ENCODE measurements at regions of chr1 and their contacts with region 1.

Region 1: DNA sequence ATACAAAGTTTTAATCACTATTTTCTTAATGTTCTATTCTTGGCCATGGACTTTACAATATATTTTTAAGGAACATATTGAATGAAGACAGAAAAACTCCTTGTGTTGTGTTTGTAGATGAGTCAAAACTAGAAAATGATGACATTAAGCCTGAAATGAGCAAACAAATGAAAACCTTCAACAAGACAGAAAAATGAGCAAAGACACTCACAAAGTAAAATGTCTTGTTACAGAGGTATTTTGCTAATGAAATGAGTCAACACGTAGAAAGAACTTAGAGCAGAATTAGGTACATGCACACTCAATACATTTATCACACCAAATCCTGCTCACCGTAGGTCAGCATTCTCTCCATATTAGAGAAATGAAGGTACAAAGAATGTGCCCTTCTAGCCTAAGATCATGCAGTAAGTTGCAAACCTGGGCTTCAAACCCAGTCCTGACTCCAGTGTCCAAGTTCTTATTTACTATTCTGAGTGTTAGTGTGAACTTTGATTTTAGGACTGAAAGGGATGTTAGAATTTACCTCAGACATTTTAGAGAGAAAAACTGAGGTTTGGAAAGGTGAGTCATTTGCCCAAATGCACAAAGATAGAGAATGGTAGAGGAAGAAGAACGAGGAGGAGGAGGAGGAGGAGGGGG is 133.9 kb upstream of the SGIP1 start:
- DNase-seq: no peak
- H3K4me3 Mint-ChIP-seq: no peak overlapping the region
- H3K27ac Mint-ChIP-seq: peak overlapping the region; percentile 77
- H3K4me1 Mint-ChIP-seq: peaks cover 35% of the 10 kb centered on the region
- H3K27me3 Mint-ChIP-seq: no peaks in the 10 kb centered on the region

Region 2: GRCh38 chr1:66258404-66259105 is 141.5 kb before region 1 on chr1:
- intact Hi-C with region 1: loop called (anchors 1 kb)
- DNase-seq: no peak
- H3K4me3 Mint-ChIP-seq: no peak overlapping the region
- H3K27ac Mint-ChIP-seq: no peak overlapping the region
- H3K4me1 Mint-ChIP-seq: peaks cover 52% of the 10 kb centered on the region
- H3K27me3 Mint-ChIP-seq: peaks cover 7% of the 10 kb centered on the region

Region 3: DNA sequence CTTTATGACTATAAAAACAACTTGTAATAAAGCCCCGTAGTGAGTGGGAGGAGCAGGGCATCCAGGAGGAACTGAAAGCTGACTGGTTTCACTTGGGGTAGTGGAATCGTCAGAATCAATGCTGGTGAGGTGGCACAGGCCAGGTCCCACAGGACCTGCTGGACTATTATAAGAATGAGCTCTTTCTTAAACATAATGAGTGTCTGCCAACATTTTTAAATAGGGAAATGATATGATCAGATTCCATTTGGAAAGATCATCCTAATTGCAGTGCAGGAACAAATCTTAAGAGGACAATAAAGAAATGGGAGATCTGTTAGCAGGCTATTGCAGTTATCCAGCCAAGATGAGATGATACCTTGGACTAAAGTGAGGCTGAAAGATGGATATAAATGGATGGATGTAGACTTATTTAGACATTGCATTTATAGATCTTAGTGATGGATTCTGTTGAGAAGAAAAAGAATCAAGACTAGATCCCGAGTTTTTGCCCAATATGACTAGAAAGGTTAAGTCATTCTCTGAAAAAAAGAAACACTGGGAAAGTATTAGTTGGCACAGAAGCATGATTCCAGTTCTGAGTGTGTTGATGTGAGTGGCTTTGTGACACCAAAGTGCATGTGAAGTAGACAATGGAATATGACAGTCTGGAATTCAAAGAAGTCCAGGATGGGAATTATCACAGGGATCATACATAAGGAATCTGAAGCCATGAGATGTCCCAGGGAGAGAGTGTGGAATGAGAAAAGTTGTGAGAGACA is 19.4 kb before region 1 on chr1:
- intact Hi-C with region 1: loop called (anchors 1 kb)
- DNase-seq: no peak
- H3K4me3 Mint-ChIP-seq: no peak overlapping the region
- H3K27ac Mint-ChIP-seq: no peak overlapping the region
- H3K4me1 Mint-ChIP-seq: peaks cover 26% of the 10 kb centered on the region
- H3K27me3 Mint-ChIP-seq: peaks cover 2% of the 10 kb centered on the region

Region 4: DNA sequence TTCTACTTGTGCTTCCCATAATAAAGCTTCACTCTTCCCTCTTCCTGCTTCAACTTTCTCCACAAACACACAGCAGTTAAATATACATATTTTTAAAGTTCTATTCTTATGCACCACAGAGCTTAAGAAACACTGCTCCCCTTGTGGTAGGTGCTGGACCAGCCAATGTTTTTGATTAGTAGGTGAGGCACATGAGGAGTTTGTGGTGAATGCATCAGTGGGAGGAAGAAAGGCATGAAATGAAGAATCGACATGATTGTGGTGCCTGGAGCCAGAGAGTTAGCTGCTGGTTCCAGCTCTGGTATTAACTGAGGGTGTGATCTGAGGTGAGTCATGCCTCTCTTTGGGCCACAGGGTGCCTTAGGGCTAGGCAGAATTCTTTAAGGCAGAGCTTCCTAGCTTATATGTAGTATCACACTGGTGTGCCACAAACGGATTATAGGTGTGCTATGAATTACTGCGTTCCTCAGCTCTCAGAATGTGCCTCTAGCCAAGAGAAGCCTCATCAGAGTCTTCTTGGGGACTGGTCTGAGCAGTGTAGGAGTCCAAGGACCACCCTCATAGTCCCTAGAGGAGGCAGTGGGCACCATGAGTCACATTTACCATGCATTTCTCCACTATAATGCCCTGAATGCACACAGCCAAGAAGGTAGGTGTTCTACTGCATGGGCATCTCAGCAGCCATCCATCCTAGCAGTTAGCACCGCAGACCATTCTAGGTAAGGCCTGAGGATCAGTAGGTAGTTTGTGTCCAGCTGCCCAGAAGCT is 36.6 kb after region 1 on chr1:
- intact Hi-C with region 1: loop called (anchors 1 kb)
- DNase-seq: peak; percentile 31
- H3K4me3 Mint-ChIP-seq: no peak overlapping the region
- H3K27ac Mint-ChIP-seq: no peak overlapping the region
- H3K4me1 Mint-ChIP-seq: peaks cover 32% of the 10 kb centered on the region
- H3K27me3 Mint-ChIP-seq: peaks cover 5% of the 10 kb centered on the region

Measured in activated T-helper 2 cell treated with anti-CD3 and anti-CD28 coated beads, Interferon-gamma antibody, Interleukin-2, Interleukin-4, amounts not matched to agents 10 μg/mL and 5 μg/mL and 100 μg/mL, durations not matched to agents 14 hours and 24 hours and 36 hours (primary cell).